ENCODE measurements at regions of chr2 and their contacts with region 1.

Region 1: GRCh38 chr2:109284826-109285225 is 155.8 kb downstream of the SH3RF3 start:
- DNase-seq: peak; percentile 57 to 81
- ATAC-seq: peak; percentile 66 to 84 (median 82)
- H3K4me3 ChIP-seq: no peak overlapping the region
- H3K27ac ChIP-seq: peak overlapping the region; percentile 65
- H3K4me1 ChIP-seq: peaks cover 47% of the 10 kb centered on the region
- H3K27me3 ChIP-seq: no peaks in the 10 kb centered on the region
- CTCF ChIP-seq: no peak

Region 2: GRCh38 chr2:109497463-109497862 is 212.6 kb after region 1 on chr2:
- intact Hi-C with region 1: loop called in 1 of 2 experiments (anchors 10 kb)
- DNase-seq: peak in 1 of 2 donors; percentile 75
- ATAC-seq: peak; percentile 78 to 81 (median 80)
- H3K4me3 ChIP-seq: peak overlapping the region; percentile 36
- H3K27ac ChIP-seq: peak overlapping the region; percentile 81
- H3K4me1 ChIP-seq: peaks cover 26% of the 10 kb centered on the region
- H3K27me3 ChIP-seq: no peaks in the 10 kb centered on the region
- CTCF ChIP-seq: no peak